Common myeloid progenitor, CD34-positive (primary cell): ENCODE measurements at regions of chr1 and their contacts with region 1.

Region 1: GRCh38 chr1:157992031-157992832 is 1.2 kb upstream of the KIRREL1 start:
- DNase-seq: peak; percentile 56 to 75 (median 64)
- H3K4me3 ChIP-seq: peak overlapping the region in 3 of 7 experiments; percentile 69 to 81 (median 73)
- H3K27ac ChIP-seq: no peak overlapping the region
- H3K4me1 ChIP-seq: peaks cover 0 to 20% (median 16%) of the 10 kb centered on the region in 4 experiments
- H3K27me3 ChIP-seq: peaks cover 0 to 12% (median 2%) of the 10 kb centered on the region in 5 experiments

Region 2: GRCh38 chr1:157963713-157964112 is 28.5 kb before region 1 on chr1:
- CTCF ChIA-PET with region 1: interaction called, 123 read pairs
- POLR2A ChIA-PET with region 1: no interaction called
- DNase-seq: peak; percentile 50 to 76 (median 64)
- H3K4me3 ChIP-seq: no peak overlapping the region
- H3K27ac ChIP-seq: no peak overlapping the region
- H3K4me1 ChIP-seq: peaks cover 0 to 5% (median 2%) of the 10 kb centered on the region in 4 experiments
- H3K27me3 ChIP-seq: peaks cover 0 to 3% (median 0%) of the 10 kb centered on the region in 5 experiments

Region 3: GRCh38 chr1:158011714-158012113 is 19.5 kb after region 1 on chr1:
- CTCF ChIA-PET with region 1: interaction called, 23 read pairs
- POLR2A ChIA-PET with region 1: no interaction called
- DNase-seq: no peak
- H3K4me3 ChIP-seq: no peak overlapping the region
- H3K27ac ChIP-seq: no peak overlapping the region
- H3K4me1 ChIP-seq: peaks cover 0 to 3% (median 0%) of the 10 kb centered on the region in 4 experiments
- H3K27me3 ChIP-seq: no peaks in the 10 kb centered on the region

Region 4: DNA sequence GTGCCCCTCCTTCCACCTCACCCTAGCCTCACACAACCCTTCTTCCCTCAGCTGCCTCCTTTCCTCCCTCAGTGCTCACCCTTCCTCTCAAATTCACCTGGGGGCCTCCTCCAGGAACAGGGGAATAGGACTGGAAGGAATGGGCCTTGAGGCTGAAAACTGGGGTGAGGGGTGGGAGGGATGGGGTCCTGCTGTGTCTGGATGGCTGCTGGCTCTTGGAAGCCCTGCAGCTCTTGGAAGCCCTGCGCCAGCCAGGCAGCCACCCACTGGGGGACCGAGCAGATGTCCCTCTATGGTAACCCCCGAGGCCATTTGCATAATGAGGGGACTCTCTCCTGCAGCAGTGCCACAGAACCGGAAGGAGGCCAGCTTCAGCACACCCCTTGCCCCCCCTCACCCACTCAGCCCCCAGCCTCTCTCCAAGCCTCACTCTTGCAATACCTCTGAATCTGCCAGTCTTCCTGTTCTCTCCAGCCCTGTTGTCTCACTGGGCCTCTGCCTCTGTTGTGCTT is 86.4 kb after region 1 on chr1:
- CTCF ChIA-PET with region 1: interaction called, 84 read pairs
- POLR2A ChIA-PET with region 1: no interaction called
- DNase-seq: peak in 2 of 3 donors; percentile 10 to 34
- H3K4me3 ChIP-seq: no peak overlapping the region
- H3K27ac ChIP-seq: no peak overlapping the region
- H3K4me1 ChIP-seq: peaks cover 0 to 5% (median under 1%) of the 10 kb centered on the region in 4 experiments
- H3K27me3 ChIP-seq: no peaks in the 10 kb centered on the region

Region 5: DNA sequence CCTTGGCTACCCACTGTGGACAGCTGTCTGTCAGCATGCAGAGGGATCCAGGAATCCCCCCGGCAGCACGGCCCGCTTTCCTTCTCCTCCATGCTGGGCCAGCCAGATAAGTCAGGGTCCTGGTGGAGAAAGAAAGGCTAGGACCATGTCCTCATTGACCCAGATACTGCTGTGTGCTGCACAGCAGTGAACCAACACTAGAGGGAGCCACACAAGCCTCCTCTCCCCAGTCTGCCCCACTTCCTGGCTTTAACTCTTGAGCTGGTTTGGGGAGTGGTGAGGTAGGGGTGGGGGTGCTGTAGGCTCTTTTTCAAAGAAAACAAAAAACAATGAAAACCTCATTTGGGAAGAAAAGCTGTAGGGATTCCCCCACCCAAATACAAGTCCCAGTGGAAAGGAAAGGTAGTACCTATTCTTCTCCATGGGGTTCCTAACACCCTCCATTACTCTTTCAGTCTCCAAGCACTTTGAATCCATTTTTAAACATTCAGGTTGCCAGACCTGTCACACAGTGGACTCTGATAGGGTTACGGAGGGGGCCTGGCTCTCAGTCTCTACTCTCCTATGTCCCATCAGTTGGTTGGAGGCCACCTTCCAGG is 103.6 kb after region 1 on chr1:
- CTCF ChIA-PET with region 1: interaction called, 23 read pairs
- POLR2A ChIA-PET with region 1: no interaction called
- DNase-seq: peak; percentile 38 to 61 (median 46)
- H3K4me3 ChIP-seq: no peak overlapping the region
- H3K27ac ChIP-seq: no peak overlapping the region
- H3K4me1 ChIP-seq: no peaks in the 10 kb centered on the region
- H3K27me3 ChIP-seq: no peaks in the 10 kb centered on the region